ENCODE measurements at regions of chr7 and their contacts with region 1.

Region 1: DNA sequence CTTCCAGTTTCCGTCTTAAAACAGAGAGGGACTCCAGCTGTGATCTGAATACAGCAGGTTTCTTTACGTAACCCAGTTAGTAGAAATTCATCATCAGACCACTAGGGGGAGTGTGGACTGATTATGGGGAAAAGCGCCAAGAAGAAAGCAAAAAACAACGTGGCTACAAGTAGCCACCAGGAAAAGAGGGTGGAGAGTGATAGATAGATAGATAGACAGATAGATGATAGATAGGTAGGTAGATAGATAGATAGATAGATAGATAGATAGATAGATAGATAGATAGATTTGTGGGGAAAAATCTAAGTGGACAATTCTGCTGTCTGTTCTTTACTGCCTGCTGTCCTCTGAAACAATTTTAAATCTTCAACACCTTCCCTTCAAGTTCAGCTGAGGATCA is 12.7 kb upstream of the AKR1B10 start:
- DNase-seq: no peak
- ATAC-seq: peak; percentile 72
- H3K4me3 Mint-ChIP-seq: no peak overlapping the region
- H3K27ac Mint-ChIP-seq: no peak overlapping the region
- H3K4me1 Mint-ChIP-seq: peaks cover 2% of the 10 kb centered on the region
- H3K27me3 Mint-ChIP-seq: peaks cover 6% of the 10 kb centered on the region
- CTCF ChIP-seq: peak; percentile 98

Region 2: DNA sequence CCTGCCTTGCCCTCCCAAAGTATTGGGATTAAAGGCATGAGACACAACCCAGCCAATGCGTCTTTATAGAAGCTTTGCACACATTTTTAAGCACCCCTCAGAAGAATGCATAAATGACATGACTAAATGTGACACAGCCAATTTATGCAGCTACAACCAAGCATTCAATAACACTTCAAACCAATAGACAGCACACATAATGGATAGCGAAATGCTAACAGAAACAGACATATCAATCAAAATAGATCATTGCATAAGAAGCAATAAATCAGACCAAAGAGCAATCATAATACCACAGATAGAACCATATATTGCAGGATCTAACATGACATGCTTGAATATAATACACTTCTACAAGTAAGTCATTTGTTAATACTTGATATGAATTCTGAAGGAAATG is 21.6 kb before region 1 on chr7:
- CTCF ChIA-PET with region 1: no interaction called
- POLR2A ChIA-PET with region 1: no interaction called
- intact Hi-C with region 1: no loop called
- DNase-seq: no peak
- ATAC-seq: no peak
- H3K4me3 Mint-ChIP-seq: no peak overlapping the region
- H3K27ac Mint-ChIP-seq: no peak overlapping the region
- H3K4me1 Mint-ChIP-seq: no peaks in the 10 kb centered on the region
- H3K27me3 Mint-ChIP-seq: peaks cover 16% of the 10 kb centered on the region
- CTCF ChIP-seq: no peak

Region 3: GRCh38 chr7:134547397-134548054 is 32.9 kb after region 1 on chr7:
- CTCF ChIA-PET with region 1: interaction called, 10 read pairs
- POLR2A ChIA-PET with region 1: no interaction called
- intact Hi-C with region 1: loop called (anchors 2 kb)
- DNase-seq: peak; percentile 42
- ATAC-seq: peak; percentile 78
- H3K4me3 Mint-ChIP-seq: peak overlapping the region; percentile 58
- H3K27ac Mint-ChIP-seq: no peak overlapping the region
- H3K4me1 Mint-ChIP-seq: peaks cover 11% of the 10 kb centered on the region
- H3K27me3 Mint-ChIP-seq: peaks cover 14% of the 10 kb centered on the region
- CTCF ChIP-seq: no peak